A673 (cell line): ENCODE measurements at regions of chr17 and their contacts with region 1.

Region 1: GRCh38 chr17:7136266-7136877 is 21.8 kb upstream of the ASGR2 start:
- DNase-seq: peak; percentile 82
- H3K4me3 ChIP-seq: peak overlapping the region; percentile 38
- H3K27ac ChIP-seq: no peak overlapping the region
- H3K4me1 ChIP-seq: peaks cover 15% of the 10 kb centered on the region
- H3K27me3 ChIP-seq: no peaks in the 10 kb centered on the region
- CTCF ChIP-seq: peak; percentile 98

Region 2: DNA sequence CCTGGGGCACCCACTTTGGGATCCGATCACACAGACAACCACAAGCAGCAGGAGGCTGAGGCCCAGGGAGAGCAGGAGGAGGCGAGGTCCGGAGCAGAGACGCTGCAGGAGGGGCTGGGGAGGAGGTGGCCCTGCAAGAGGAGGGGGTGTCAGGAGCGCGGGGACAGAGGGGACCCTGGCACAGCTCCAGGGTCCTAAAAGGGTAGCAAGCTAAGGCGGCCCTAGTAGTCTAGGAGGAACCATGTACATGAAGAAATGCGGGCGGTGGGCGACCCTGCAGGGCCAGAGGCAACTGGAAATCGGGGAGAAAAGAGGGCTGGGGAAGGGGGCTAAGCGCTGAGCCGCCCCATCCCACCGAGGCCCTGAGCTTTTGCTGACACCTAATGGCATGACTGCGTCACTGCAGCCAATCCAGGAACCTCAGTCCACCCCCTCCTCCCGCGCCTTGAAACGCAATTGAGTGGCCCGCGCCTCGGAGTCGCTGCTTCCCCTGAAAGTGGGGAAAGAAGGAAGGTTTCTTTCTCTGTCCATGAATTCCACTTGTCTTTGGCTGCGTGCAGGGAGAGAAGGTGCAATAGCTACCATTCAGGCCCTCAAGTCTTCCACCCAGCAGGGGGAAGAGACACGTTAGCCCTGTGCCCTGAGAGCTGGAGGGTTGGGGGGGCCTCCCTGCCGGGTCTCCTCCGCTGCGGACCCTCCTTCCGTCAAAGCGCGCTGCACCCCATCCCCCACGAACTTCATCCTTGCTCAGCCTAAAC is 41.0 kb after region 1 on chr17:
- CTCF ChIA-PET with region 1: interaction called, 6 read pairs
- POLR2A ChIA-PET with region 1: no interaction called
- intact Hi-C with region 1: loop called (anchors 5 kb)
- DNase-seq: peak; percentile 89
- H3K4me3 ChIP-seq: peak overlapping the region; percentile 54
- H3K27ac ChIP-seq: peak overlapping the region; percentile 63
- H3K4me1 ChIP-seq: peaks cover 8% of the 10 kb centered on the region
- H3K27me3 ChIP-seq: no peaks in the 10 kb centered on the region
- CTCF ChIP-seq: peak; percentile 96